HAP-1 (cell line): ENCODE measurements at regions of chr3 and their contacts with region 1.

Region 1: GRCh38 chr3:129824926-129825541 is 68.5 kb downstream of the TMCC1 start:
- DNase-seq: peak; percentile 69 to 74
- H3K4me3 ChIP-seq: no peak overlapping the region
- H3K4me1 ChIP-seq: peaks cover 7% of the 10 kb centered on the region; the same call in 1 of the 2 replicates
- H3K27me3 ChIP-seq: no peaks in the 10 kb centered on the region

Region 2: DNA sequence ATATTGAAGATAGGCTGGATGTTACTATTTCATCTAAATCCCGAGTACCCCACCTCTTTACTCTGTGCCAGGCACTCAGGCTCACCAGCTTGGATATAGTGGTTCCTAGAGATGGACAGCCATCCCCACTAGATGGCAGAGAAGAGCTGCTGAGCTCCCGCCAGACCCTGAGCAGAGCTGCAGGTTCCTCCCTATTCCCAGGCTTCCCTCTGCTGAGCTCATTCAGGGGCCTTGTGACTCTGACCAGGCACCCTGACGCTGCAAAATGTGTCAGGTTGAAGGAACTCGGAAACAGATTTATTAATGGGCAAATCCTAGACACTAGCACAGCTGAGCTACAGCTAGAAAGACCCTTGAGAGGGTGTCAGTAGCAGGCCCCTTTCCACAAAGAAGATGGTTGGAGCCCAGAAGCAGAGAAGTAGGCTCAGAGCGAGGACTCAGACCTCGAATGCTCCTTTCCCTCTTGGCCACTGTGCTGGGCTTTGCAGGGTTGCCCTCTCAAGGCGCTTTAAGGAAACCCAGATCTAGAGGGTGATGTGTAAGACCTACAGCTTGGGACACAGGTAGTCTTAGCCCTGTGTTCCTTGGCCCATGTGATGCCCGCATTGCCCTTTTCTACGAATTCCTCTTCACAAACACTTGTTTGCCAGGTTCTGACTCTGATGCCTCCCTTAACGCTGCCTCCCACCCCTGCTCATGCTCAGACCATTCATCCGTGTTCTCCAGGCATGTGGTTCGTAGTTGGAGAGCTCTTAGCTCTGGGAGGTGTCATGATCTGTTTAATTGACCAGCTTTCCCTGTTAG is 334.6 kb before region 1 on chr3:
- in situ Hi-C with region 1: loop called (anchors 25 kb)
- DNase-seq: peak; percentile 83
- H3K4me3 ChIP-seq: no peak overlapping the region
- H3K4me1 ChIP-seq: no peaks in the 10 kb centered on the region; the same call in 1 of the 2 replicates
- H3K27me3 ChIP-seq: no peaks in the 10 kb centered on the region

Region 3: GRCh38 chr3:129633751-129634392 is 191.2 kb before region 1 on chr3:
- in situ Hi-C with region 1: loop called (anchors 5 kb)
- DNase-seq: peak in 1 of 2 experiments; percentile 49
- H3K4me3 ChIP-seq: no peak overlapping the region
- H3K4me1 ChIP-seq: 0 out of 2 replicates have a peak, but pooled peaks cover 3% of the 10 kb centered on the region
- H3K27me3 ChIP-seq: no peaks in the 10 kb centered on the region

Region 4: DNA sequence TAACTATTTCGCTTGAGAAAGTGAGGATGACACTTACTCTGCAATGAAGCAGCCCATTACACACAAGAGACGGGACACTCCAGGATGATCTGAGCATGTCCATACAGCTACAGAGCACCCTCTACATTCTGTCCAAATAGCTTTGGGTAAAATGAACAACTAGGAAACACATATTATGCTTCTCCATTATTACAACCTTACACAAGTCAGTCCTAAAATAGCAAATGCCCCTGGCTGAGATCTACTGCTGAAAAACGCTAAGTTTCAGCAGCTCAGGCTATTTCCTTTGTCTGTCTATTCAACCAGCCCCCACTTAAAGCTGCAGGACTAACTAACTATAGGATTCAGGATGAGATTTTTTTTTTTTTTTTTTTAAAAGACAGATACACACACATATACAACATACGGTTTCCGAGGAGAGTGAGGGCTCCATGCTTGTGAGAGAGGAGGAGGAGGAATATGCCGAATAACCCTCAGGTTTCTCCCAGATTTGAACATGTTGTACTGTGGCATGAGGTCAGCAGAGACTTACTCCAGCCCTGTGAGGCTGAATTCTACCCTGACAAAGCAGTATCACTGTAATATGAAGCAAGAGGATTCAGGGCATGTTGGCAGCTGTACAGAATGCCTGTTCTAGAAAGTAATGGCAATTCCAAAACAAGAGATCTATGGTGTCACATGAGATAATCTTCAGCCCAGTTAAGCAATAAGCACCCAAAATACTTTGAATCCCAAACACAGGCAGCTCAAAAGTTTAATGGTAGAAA is 101.3 kb before region 1 on chr3:
- in situ Hi-C with region 1: no loop called
- DNase-seq: no peak
- H3K4me3 ChIP-seq: no peak overlapping the region
- H3K4me1 ChIP-seq: no peaks in the 10 kb centered on the region
- H3K27me3 ChIP-seq: no peaks in the 10 kb centered on the region